CD4-positive, alpha-beta T cell (primary cell): ENCODE measurements at regions of chr2 and their contacts with region 1.

Region 1: DNA sequence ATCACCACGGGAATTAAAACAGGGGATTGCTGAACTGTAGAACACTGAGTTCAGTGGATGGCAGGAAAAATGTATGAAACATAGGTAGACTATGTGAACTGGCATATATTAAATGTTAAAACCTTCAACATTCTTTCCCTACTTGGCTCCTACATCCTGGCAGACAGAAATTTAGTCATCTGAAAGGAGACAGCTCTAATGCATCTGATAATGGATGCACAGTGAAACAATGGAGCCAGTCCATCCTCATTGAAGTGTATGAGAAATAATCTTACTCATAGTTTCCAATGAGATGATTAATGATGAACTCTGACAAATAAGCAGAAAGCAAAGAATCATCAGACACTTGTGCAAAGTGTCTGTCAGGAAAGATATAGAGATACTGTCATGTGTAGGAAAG is 1629.7 kb upstream of the TMEFF2 start:
- DNase-seq: no peak
- ATAC-seq: no peak
- H3K4me3 ChIP-seq: no peak overlapping the region
- H3K4me3 Mint-ChIP-seq: no peak overlapping the region
- H3K27ac ChIP-seq: no peak overlapping the region
- H3K27ac Mint-ChIP-seq: no peak overlapping the region
- H3K4me1 ChIP-seq: no peaks in the 10 kb centered on the region
- H3K4me1 Mint-ChIP-seq: no peaks in the 10 kb centered on the region
- H3K27me3 ChIP-seq: no peaks in the 10 kb centered on the region
- H3K27me3 Mint-ChIP-seq: no peaks in the 10 kb centered on the region
- CTCF ChIP-seq: no peak

Region 2: DNA sequence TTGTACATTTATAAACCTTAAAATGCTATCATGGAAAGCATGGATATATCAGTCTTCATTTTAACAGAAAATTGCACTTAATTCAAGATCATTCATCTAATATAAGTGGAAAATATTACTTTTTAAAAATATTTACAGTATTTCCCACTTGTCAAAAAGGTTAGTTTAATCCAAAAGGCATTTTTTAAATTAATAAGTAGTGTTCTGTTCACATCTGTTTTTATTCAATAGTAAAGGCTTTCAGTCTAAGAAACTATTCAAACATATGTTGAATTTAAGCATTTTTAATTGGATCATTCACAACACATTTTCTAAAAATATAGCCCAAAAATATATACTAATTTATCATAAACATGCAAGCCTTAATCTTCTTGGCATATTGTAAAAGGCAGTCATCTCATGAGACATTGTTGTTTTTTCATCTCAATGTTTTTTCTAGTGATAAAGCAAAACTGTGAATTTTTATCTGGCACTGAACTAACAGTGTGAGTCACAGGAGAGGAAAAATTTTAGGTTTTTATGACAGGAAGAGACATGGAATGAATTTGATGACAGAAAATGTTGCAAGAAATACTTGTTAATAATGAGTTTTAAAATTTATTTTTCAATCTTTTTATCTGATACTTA is 12.8 kb after region 1 on chr2:
- CTCF ChIA-PET with region 1: no interaction called
- POLR2A ChIA-PET with region 1: no interaction called
- intact Hi-C with region 1: loop called in 1 of 2 experiments (anchors 1 kb)
- DNase-seq: no peak
- ATAC-seq: no peak
- H3K4me3 ChIP-seq: no peak overlapping the region
- H3K4me3 Mint-ChIP-seq: no peak overlapping the region
- H3K27ac ChIP-seq: no peak overlapping the region
- H3K27ac Mint-ChIP-seq: no peak overlapping the region
- H3K4me1 ChIP-seq: no peaks in the 10 kb centered on the region
- H3K4me1 Mint-ChIP-seq: no peaks in the 10 kb centered on the region
- H3K27me3 ChIP-seq: no peaks in the 10 kb centered on the region
- H3K27me3 Mint-ChIP-seq: no peaks in the 10 kb centered on the region
- CTCF ChIP-seq: no peak